Activated CD4-positive, alpha-beta T cell treated with anti-CD3 and anti-CD28 coated beads for 36 hours (primary cell): ENCODE measurements at regions of chr9 and their contacts with region 1.

Region 1: GRCh38 chr9:78261403-78262001 is 25.6 kb downstream of the CEP78 start:
- DNase-seq: no peak
- ATAC-seq: no peak
- H3K4me3 Mint-ChIP-seq: no peak overlapping the region
- H3K27ac Mint-ChIP-seq: no peak overlapping the region
- H3K4me1 Mint-ChIP-seq: no peaks in the 10 kb centered on the region
- H3K27me3 Mint-ChIP-seq: no peaks in the 10 kb centered on the region

Region 2: GRCh38 chr9:76557674-76558225 is 1703.8 kb before region 1 on chr9:
- CTCF ChIA-PET with region 1: no interaction called
- POLR2A ChIA-PET with region 1: no interaction called
- intact Hi-C with region 1: no loop called
- DNase-seq: no peak
- ATAC-seq: no peak
- H3K4me3 Mint-ChIP-seq: no peak overlapping the region
- H3K27ac Mint-ChIP-seq: no peak overlapping the region
- H3K4me1 Mint-ChIP-seq: peaks cover 9% of the 10 kb centered on the region
- H3K27me3 Mint-ChIP-seq: peaks cover 10% of the 10 kb centered on the region

Region 3: GRCh38 chr9:77807281-77807683 is 454.2 kb before region 1 on chr9:
- CTCF ChIA-PET with region 1: no interaction called
- POLR2A ChIA-PET with region 1: no interaction called
- intact Hi-C with region 1: no loop called
- DNase-seq: no peak
- ATAC-seq: peak; percentile 89
- H3K4me3 Mint-ChIP-seq: no peak overlapping the region
- H3K27ac Mint-ChIP-seq: peak overlapping the region; percentile 55
- H3K4me1 Mint-ChIP-seq: peaks cover 39% of the 10 kb centered on the region
- H3K27me3 Mint-ChIP-seq: no peaks in the 10 kb centered on the region

Region 4: GRCh38 chr9:78296893-78297671 is 35.6 kb after region 1 on chr9 and contains the start of gene PSAT1:
- CTCF ChIA-PET with region 1: interaction called, 5 read pairs
- POLR2A ChIA-PET with region 1: no interaction called
- intact Hi-C with region 1: loop called (anchors 1 to 2 kb)
- DNase-seq: peak; percentile 96
- ATAC-seq: peak; percentile 98
- H3K4me3 Mint-ChIP-seq: peak within 1 kb of the TSS; percentile 91
- H3K27ac Mint-ChIP-seq: peak within 1 kb of the TSS; percentile 97
- H3K4me1 Mint-ChIP-seq: peaks cover 29% of the 10 kb centered on the region
- H3K27me3 Mint-ChIP-seq: no peaks in the 10 kb centered on the region
- total RNA-seq, gene PSAT1: 145 to 190 TPM

Region 5: GRCh38 chr9:78369639-78370219 is 108.2 kb after region 1 on chr9:
- CTCF ChIA-PET with region 1: interaction called, 5 read pairs
- POLR2A ChIA-PET with region 1: no interaction called
- intact Hi-C with region 1: loop called (anchors 1 kb)
- DNase-seq: peak; percentile 75
- ATAC-seq: peak; percentile 36
- H3K4me3 Mint-ChIP-seq: no peak overlapping the region
- H3K27ac Mint-ChIP-seq: no peak overlapping the region
- H3K4me1 Mint-ChIP-seq: no peaks in the 10 kb centered on the region
- H3K27me3 Mint-ChIP-seq: peaks cover 13% of the 10 kb centered on the region